Activated CD4-positive, alpha-beta T cell treated with anti-CD3 and anti-CD28 coated beads, Interleukin-2, amount 10 ng/mL, durations not matched to agents 24 days and 14 days (primary cell): ENCODE measurements at regions of chr16 and their contacts with region 1.

Region 1: GRCh38 chr16:74666425-74667254 is at the start of gene RFWD3:
- DNase-seq: peak; percentile 98
- H3K4me3 Mint-ChIP-seq: peak within 1 kb of the TSS; percentile 88
- H3K27ac Mint-ChIP-seq: peak within 1 kb of the TSS; percentile 96
- H3K4me1 Mint-ChIP-seq: peaks cover 42% of the 10 kb centered on the region
- H3K27me3 Mint-ChIP-seq: no peaks in the 10 kb centered on the region
- total RNA-seq, gene RFWD3: 109 and 117 TPM in 2 replicates

Region 2: DNA sequence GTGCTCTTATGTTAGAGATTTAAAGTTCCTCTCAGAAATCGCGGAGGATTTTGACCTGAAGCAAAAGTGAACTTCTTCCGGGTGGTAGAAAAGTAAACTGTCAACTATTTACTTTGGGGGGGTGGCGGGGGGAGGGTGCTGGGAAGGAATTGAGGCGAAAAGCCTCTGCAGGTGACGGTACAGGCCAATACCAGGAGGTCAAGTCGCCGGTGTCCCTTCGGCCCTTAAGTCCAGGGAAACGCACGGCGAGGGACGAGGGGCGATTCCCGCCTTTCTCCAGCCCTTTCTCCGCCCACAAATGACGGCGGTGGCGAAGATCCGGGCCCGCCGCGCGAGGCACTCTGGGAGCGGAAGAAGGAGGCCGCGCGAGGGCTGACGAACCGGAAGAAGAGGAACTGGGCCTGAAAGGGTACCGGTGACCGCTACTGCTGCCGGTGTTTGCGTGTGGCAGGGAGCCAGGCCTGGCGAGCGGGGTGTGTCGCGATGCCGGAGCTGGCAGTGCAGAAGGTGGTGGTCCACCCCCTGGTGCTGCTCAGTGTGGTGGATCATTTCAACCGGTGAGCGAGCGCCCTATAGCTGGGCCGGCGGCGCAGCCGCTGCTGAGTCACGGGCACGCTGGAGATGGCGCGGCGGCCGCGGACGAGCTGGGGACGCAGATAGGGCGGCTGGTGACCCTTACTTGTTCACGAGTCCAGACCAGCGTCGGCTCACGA is 370.1 kb before region 1 on chr16 and contains the start of gene PSMD7:
- intact Hi-C with region 1: loop called (anchors 2 kb)
- DNase-seq: peak; percentile 97
- H3K4me3 Mint-ChIP-seq: peak within 1 kb of the TSS; percentile 89
- H3K27ac Mint-ChIP-seq: peak within 1 kb of the TSS; percentile 89
- H3K4me1 Mint-ChIP-seq: peaks cover 18% of the 10 kb centered on the region
- H3K27me3 Mint-ChIP-seq: no peaks in the 10 kb centered on the region
- total RNA-seq, gene PSMD7: 174 and 178 TPM in 2 replicates

Region 3: DNA sequence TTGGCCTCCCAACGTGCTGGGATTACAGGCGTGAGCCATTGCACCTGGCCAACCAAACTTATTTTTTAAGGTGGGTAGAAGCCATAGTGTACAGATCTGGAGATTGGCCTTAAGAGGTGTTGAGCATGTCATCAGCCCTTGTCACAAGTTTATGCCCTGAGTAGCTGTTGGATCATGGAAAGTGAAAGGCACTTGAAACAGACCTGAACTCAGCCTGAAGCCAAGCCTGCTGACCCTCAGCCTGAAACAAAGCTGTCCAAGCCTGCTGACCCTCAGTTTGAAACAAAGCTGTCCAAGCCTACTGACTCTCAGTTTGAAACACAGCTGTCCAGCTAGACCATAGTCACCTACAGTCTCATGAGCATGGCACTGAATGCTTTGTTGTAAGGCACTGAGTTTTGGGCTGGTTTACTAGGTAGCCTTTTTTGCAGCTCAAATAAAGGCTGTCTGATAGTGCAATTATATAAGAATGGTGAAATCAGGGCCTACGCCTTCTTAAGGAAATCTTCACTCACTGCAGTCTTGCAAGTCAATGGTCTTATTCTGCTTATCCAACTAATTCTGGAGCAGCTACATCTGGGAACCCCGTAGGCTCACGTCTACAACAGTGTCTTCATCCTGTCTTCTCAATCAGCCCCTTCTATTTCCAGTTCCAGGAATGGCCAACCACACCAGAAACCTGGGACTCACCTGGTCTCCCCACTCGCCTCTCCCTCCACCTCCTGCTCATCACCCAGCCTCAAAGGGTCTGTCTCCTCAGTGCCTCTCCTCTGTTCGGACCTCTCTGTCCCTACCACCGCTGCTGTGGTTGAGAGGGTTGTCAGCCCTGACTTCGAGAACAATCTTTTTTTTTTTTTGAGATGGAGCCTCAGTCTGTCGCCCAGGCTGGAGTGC is 293.4 kb before region 1 on chr16:
- intact Hi-C with region 1: loop called (anchors 2 kb)
- DNase-seq: peak; percentile 63
- H3K4me3 Mint-ChIP-seq: no peak overlapping the region
- H3K27ac Mint-ChIP-seq: no peak overlapping the region
- H3K4me1 Mint-ChIP-seq: peaks cover 1% of the 10 kb centered on the region
- H3K27me3 Mint-ChIP-seq: no peaks in the 10 kb centered on the region

Region 4: GRCh38 chr16:74606521-74607310 is 59.9 kb before region 1 on chr16 and contains the start of gene GLG1:
- intact Hi-C with region 1: loop called (anchors 1 kb)
- DNase-seq: peak; percentile 98
- H3K4me3 Mint-ChIP-seq: peak within 1 kb of the TSS; percentile 87
- H3K27ac Mint-ChIP-seq: peak within 1 kb of the TSS; percentile 84
- H3K4me1 Mint-ChIP-seq: peaks cover 53% of the 10 kb centered on the region
- H3K27me3 Mint-ChIP-seq: no peaks in the 10 kb centered on the region
- total RNA-seq, gene GLG1: 64.1 and 64.7 TPM in 2 replicates

Region 5: DNA sequence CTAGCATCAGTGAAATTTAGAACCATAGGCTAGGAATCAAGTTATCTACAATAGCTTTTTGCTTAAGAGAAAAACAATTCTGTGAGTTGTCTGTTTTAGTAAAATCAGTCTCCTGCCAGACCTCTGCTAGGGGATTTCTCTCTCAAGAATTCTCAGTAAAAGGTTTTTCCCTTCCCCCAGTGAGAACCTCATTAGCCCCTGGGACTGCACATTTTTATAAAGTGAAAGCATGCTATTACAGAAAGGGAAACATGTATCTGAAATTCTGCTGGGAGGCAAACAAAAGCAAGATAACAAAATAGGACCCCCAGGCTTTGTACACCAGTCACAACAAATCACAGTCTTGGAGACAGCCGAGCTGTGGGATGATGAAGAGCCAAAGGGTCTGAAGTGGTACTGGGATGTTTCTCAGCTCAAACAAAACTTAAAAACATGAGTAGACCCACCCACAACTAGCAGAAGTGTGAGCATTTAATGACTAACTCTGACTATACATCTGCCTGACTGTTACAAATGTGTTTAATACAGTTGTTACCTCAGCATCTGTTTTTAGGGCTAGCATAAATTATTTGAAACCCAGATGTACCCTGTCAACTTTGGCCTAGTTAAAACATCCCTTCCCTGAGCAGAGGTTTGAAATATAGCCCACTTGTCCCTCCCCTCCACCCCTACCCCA is 39.8 kb before region 1 on chr16:
- intact Hi-C with region 1: loop called (anchors 5 kb)
- DNase-seq: no peak
- H3K4me3 Mint-ChIP-seq: peak overlapping the region; percentile 32
- H3K27ac Mint-ChIP-seq: peak overlapping the region; percentile 91
- H3K4me1 Mint-ChIP-seq: peaks cover 28% of the 10 kb centered on the region
- H3K27me3 Mint-ChIP-seq: no peaks in the 10 kb centered on the region

Region 6: GRCh38 chr16:74637742-74638453 is 28.7 kb before region 1 on chr16:
- intact Hi-C with region 1: no loop called
- DNase-seq: no peak
- H3K4me3 Mint-ChIP-seq: no peak overlapping the region
- H3K27ac Mint-ChIP-seq: no peak overlapping the region
- H3K4me1 Mint-ChIP-seq: peaks cover 1% of the 10 kb centered on the region
- H3K27me3 Mint-ChIP-seq: no peaks in the 10 kb centered on the region

Region 7: DNA sequence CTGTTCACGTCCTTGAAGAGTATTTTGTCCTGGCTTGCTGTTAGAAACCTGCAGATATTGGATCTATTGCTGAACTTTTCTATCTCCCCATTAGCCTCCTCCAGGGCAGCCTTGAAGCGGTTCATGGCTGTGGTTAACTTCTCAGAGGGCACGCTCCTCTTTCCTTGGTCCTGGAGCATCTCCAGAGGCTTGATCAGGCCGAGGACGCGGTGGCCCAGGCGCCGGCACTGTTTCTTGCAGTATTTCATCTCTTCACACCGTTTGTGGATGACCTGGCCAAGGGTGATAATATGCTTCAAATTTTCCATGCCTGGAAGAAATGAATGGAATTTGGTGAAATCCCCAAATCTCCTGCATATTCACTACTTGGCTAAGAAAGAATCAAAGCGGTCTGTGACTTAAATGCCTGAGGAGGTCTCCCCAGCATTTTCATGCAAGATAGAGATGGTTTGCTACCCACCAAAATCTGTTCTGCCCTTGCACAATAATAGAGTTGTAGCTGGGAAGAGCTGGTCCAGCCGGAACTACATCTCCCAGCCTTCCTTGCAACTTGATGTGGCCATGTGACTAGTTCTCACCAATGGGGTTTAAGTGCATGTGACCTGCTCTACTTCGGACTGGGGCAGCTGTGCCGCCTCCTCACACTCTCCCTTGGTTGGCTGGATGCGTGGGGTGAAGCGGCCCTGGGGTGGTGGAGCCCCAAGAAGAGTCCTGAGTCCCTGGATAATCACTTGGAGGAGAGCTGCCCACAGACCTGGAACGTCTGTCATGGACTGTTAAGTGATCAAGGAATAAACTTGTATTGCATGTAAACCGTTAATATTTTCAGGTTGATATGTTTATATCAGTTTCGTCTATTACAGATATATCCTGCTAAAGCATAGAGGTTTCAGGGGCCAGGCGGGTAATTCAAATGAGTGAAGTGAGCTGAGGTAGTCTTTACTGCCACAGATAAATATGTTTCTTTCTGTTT is 29.1 kb after region 1 on chr16:
- intact Hi-C with region 1: loop called (anchors 1 kb)
- DNase-seq: peak; percentile 92
- H3K4me3 Mint-ChIP-seq: peak overlapping the region; percentile 82
- H3K27ac Mint-ChIP-seq: peak overlapping the region; percentile 86
- H3K4me1 Mint-ChIP-seq: peaks cover 34% of the 10 kb centered on the region
- H3K27me3 Mint-ChIP-seq: no peaks in the 10 kb centered on the region

Region 8: DNA sequence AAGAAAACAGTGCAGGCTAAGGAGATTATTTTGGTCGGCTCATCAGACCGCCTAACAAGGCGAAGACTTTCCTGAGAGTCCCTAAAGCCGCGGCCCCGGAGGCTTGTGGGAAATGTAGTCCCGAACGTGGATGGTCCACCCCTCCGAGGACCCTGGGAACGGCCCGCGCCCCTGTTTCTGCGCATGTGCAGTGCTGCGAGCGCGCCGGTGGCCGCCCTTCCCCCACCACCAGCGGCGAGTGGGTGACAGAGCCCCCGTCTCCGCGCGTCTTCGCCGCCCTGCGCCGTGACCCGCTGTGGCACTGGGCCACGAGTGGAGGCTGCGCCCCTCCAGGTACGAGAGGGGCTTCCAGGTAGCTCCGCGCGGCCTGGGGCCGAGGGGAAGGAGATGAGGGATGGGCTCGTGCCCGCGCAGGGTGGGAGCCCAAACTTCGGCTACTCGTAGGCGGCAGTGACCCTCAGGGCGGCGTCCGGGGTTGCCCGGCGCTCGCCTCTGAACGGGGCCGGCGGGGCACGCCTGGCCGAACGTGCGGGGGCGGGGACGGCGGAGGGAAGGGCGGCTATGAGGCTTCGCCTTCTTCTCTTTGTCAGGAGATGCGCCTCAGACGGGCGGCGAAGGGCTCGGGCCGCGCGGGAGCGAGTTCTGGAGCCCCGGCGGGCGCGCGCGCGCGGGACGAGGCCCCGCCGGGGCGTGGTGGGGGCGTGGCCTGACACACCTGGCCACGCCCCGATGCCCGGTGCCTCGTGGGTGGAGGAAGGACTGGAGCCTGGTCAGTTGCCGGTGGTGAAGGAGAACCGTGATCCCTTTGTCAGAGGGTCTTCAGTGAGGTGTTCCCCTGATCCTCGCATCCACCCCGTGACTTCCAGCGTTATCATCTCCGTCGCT is 481.9 kb after region 1 on chr16 and contains the start of gene ZFP1:
- intact Hi-C with region 1: loop called (anchors 1 kb)
- DNase-seq: peak; percentile 98
- H3K4me3 Mint-ChIP-seq: peak within 1 kb of the TSS; percentile 92
- H3K27ac Mint-ChIP-seq: peak within 1 kb of the TSS; percentile 87
- H3K4me1 Mint-ChIP-seq: peaks cover 19% of the 10 kb centered on the region
- H3K27me3 Mint-ChIP-seq: no peaks in the 10 kb centered on the region
- total RNA-seq, gene ZFP1: 14.3 and 16.5 TPM in 2 replicates

Region 9: DNA sequence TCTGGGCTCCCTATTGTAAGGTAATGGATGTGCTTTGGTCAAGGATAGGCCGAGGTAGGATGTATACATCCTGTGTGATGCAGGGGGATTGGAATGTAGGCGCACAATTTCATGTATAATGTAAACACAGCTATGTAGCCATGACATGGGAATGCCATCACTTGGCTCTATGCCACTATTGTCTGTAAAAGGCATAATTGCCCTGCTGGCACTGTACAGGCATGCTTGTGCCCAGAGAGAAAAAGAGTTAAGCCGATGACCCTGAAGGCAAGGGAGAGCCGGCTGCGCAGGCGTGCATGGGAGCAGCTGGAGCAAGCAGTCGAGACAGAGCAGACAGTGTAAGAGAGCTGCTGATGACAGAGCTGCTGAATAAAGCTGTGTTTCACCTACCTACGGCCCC is 1272.2 kb after region 1 on chr16:
- intact Hi-C with region 1: no loop called
- DNase-seq: no peak
- H3K4me3 Mint-ChIP-seq: no peak overlapping the region
- H3K27ac Mint-ChIP-seq: no peak overlapping the region
- H3K4me1 Mint-ChIP-seq: no peaks in the 10 kb centered on the region
- H3K27me3 Mint-ChIP-seq: no peaks in the 10 kb centered on the region